Panc1 (cell line): ENCODE measurements at regions of chr9 and their contacts with region 1.

Region 1: GRCh38 chr9:72526901-72527800 is 5.7 kb downstream of the TMC1 start:
- DNase-seq: no peak
- ATAC-seq: peak; percentile 90
- H3K4me3 ChIP-seq: peak overlapping the region; percentile 18 to 43
- H3K27ac ChIP-seq: peak overlapping the region; percentile 94
- H3K4me1 ChIP-seq: peaks cover 47% of the 10 kb centered on the region
- H3K27me3 ChIP-seq: no peaks in the 10 kb centered on the region
- CTCF ChIP-seq: no peak

Region 2: GRCh38 chr9:72065076-72065475 is 462.1 kb before region 1 on chr9:
- CTCF ChIA-PET with region 1: no interaction called
- POLR2A ChIA-PET with region 1: no interaction called
- in situ Hi-C with region 1: no loop called
- intact Hi-C with region 1: no loop called
- DNase-seq: no peak
- ATAC-seq: no peak
- H3K4me3 ChIP-seq: no peak overlapping the region
- H3K27ac ChIP-seq: no peak overlapping the region
- H3K4me1 ChIP-seq: no peaks in the 10 kb centered on the region
- H3K27me3 ChIP-seq: no peaks in the 10 kb centered on the region
- CTCF ChIP-seq: no peak

Region 3: GRCh38 chr9:72364679-72365524 is 162.2 kb before region 1 on chr9 and contains the start of gene ZFAND5:
- CTCF ChIA-PET with region 1: no interaction called
- POLR2A ChIA-PET with region 1: interaction called, 6 read pairs
- in situ Hi-C with region 1: no loop called
- intact Hi-C with region 1: loop called (anchors 5 kb)
- DNase-seq: peak; percentile 53
- ATAC-seq: peak; percentile 94
- H3K4me3 ChIP-seq: peak within 1 kb of the TSS; percentile 85 to 88
- H3K27ac ChIP-seq: peak within 1 kb of the TSS; percentile 96
- H3K4me1 ChIP-seq: peaks cover 2% of the 10 kb centered on the region
- H3K27me3 ChIP-seq: no peaks in the 10 kb centered on the region
- CTCF ChIP-seq: peak; percentile 27; the same call in 1 of the 2 replicates
- total RNA-seq, gene ZFAND5: 185 TPM

Region 4: GRCh38 chr9:72454871-72455491 is 72.2 kb before region 1 on chr9:
- CTCF ChIA-PET with region 1: no interaction called
- POLR2A ChIA-PET with region 1: no interaction called
- in situ Hi-C with region 1: no loop called
- intact Hi-C with region 1: no loop called
- DNase-seq: no peak
- ATAC-seq: peak; percentile 38; the same call in 1 of the 2 replicates
- H3K4me3 ChIP-seq: no peak overlapping the region
- H3K27ac ChIP-seq: peak overlapping the region; percentile 76
- H3K4me1 ChIP-seq: peaks cover 5% of the 10 kb centered on the region; the same call in 1 of the 2 replicates
- H3K27me3 ChIP-seq: no peaks in the 10 kb centered on the region
- CTCF ChIP-seq: no peak

Region 5: GRCh38 chr9:72564479-72565281 is 37.5 kb after region 1 on chr9:
- CTCF ChIA-PET with region 1: no interaction called
- POLR2A ChIA-PET with region 1: no interaction called
- in situ Hi-C with region 1: no loop called
- intact Hi-C with region 1: no loop called
- DNase-seq: no peak
- ATAC-seq: no peak; the same call in 1 of the 2 replicates
- H3K4me3 ChIP-seq: no peak overlapping the region
- H3K27ac ChIP-seq: peak overlapping the region; percentile 70; the same call in 1 of the 2 replicates
- H3K4me1 ChIP-seq: peaks cover 7% of the 10 kb centered on the region; the same call in 1 of the 2 replicates
- H3K27me3 ChIP-seq: no peaks in the 10 kb centered on the region
- CTCF ChIP-seq: no peak

Region 6: GRCh38 chr9:72763022-72763421 is 235.9 kb after region 1 on chr9:
- CTCF ChIA-PET with region 1: no interaction called
- POLR2A ChIA-PET with region 1: no interaction called
- in situ Hi-C with region 1: no loop called
- intact Hi-C with region 1: no loop called
- DNase-seq: no peak
- ATAC-seq: no peak
- H3K4me3 ChIP-seq: no peak overlapping the region
- H3K27ac ChIP-seq: no peak overlapping the region
- H3K4me1 ChIP-seq: no peaks in the 10 kb centered on the region
- H3K27me3 ChIP-seq: no peaks in the 10 kb centered on the region
- CTCF ChIP-seq: no peak